ENCODE measurements at regions of chr20 and their contacts with region 1.

Region 1: DNA sequence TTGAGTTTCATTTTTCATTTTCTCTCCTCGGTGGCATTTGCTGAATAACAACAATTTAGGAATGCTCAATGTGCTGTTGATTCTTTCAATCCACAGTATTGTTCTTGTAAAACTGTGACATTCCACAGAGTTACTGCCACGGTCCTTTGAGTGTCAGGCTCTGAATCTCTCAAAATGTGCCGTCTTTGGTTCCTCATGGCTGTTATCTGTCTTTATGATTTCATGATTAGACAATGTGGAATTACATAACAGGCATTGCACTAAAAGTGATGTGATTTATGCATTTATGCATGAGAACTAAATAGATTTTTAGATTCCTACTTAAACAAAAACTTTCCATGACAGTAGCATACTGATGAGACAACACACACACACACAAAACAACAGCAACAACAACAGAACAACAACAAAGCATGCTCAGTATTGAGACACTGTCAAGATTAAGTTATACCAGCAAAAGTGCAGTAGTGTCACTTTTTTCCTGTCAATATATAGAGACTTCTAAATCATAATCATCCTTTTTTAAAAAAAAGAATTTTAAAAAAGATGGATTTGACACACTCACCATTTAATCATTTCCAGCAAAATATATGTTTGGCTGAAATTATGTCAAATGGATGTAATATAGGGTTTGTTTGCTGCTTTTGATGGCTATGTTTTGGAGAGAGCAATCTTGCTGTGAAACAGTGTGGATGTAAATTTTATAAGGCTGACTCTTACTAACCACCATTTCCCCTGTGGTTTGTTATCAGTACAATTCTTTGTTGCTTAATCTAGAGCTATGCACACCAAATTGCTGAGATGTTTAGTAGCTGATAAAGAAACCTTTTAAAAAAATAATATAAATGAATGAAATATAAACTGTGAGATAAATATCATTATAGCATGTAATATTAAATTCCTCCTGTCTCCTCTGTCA is 88.1 kb downstream of the SNAP25 start:
- DNase-seq: no peak
- ATAC-seq: no peak
- H3K4me3 ChIP-seq: no peak overlapping the region
- H3K27ac ChIP-seq: no peak overlapping the region
- H3K4me1 ChIP-seq: no peaks in the 10 kb centered on the region
- H3K27me3 ChIP-seq: no peaks in the 10 kb centered on the region
- CTCF ChIP-seq: no peak
- POLR2A ChIP-seq: no peak

Region 2: GRCh38 chr20:9710685-9711084 is 596.0 kb before region 1 on chr20:
- in situ Hi-C with region 1: no loop called
- intact Hi-C with region 1: loop called (anchors 10 kb)
- DNase-seq: no peak
- ATAC-seq: no peak
- H3K4me3 ChIP-seq: no peak overlapping the region
- H3K27ac ChIP-seq: no peak overlapping the region
- H3K4me1 ChIP-seq: no peaks in the 10 kb centered on the region
- H3K27me3 ChIP-seq: no peaks in the 10 kb centered on the region
- CTCF ChIP-seq: no peak
- POLR2A ChIP-seq: no peak

Region 3: DNA sequence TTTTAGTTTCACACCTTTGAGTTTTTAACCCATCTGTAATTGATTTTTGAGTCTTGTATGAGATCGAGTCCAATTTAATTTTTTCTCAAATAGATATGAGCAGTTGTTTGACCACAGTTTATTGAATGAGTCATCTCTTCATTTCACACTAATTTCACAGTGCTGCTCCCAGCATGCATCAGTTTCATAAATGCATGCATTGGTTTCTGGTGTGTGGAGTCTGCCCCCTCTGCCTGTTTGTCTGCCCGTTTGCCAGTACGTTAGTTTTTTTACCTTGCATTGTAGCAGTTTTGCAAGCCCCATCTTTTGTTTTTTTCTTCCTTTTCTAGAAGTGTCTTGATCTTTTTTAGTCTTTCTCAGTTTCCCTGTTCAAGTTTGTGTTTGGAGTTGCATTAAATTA is 140.3 kb after region 1 on chr20:
- in situ Hi-C with region 1: no loop called
- intact Hi-C with region 1: no loop called
- DNase-seq: no peak
- ATAC-seq: no peak
- H3K4me3 ChIP-seq: no peak overlapping the region
- H3K27ac ChIP-seq: no peak overlapping the region
- H3K4me1 ChIP-seq: no peaks in the 10 kb centered on the region
- H3K27me3 ChIP-seq: no peaks in the 10 kb centered on the region
- CTCF ChIP-seq: no peak
- POLR2A ChIP-seq: no peak

Region 4: DNA sequence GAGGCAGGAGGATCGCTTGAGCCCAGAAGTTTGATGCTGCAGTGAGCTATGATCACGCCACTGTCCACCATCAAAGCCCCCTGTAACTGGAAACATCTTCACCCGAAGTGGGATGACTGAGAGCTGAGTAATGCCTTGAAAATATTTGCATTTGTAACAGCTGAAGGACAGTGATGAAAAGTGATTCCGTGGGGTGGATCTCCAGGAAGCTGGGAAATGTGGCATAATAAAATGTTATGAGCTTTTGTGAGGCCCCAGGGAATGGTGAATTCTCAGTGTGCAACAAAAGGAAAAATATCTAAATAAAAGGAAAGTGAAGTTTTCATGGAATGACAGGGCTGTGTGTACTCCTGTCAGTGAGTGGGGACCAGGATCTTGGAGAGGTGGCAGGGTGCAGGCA is 275.1 kb after region 1 on chr20:
- in situ Hi-C with region 1: no loop called
- intact Hi-C with region 1: no loop called
- DNase-seq: no peak
- ATAC-seq: no peak
- H3K4me3 ChIP-seq: no peak overlapping the region
- H3K27ac ChIP-seq: no peak overlapping the region
- H3K4me1 ChIP-seq: no peaks in the 10 kb centered on the region
- H3K27me3 ChIP-seq: no peaks in the 10 kb centered on the region
- CTCF ChIP-seq: no peak
- POLR2A ChIP-seq: no peak